PC-3 (cell line): ENCODE measurements at regions of chr11 and their contacts with region 1.

Region 1: DNA sequence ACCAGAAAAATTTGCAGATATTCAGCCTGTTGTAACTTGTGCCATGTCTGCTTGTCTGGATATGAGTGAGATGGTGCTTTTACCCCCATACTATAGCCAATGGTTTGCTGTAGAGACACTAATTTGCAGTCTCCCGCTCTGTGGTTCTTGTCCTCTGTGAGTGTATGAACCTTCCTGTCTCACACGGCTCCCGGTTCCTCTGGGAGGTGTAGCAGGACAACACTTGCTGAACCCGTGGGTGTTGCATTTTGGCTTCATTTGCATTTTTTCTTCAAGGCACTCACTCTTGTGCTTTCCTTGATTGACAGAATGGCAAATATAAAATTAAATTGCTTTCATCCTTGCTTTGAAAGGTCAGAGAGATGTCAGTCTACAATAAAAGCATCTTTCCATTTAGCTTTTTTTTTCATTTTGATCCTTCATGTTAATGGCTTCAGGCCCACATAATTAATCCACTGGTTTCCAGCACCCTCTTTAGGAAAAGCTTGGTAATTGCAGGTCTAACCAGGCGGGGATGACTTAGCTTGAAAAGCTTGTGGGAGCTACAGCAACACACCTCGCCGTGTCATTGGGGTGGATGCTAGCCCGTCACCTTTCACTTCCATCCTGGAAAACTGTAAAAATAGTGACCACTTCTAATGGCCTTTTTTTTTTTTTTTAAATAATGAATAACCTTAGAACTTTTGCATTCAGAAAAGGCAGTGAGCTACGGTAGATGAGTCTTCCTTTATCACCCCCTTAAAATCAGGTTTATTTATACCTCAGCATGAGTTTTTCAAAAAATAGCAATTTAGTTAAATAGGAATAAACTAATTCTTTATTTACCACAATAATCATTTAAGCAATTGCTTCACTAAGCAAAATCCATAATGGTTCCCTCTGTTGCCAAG is 27.4 kb upstream of the ST14 start:
- DNase-seq: peak; percentile 92
- ATAC-seq: peak; percentile 87
- H3K4me3 ChIP-seq: no peak overlapping the region
- H3K27ac ChIP-seq: no peak overlapping the region
- H3K4me1 ChIP-seq: no peaks in the 10 kb centered on the region
- H3K27me3 ChIP-seq: no peaks in the 10 kb centered on the region
- CTCF ChIP-seq: peak; percentile 95

Region 2: GRCh38 chr11:129881570-129882170 is 250.5 kb before region 1 on chr11:
- CTCF ChIA-PET with region 1: interaction called, 20 read pairs
- POLR2A ChIA-PET with region 1: no interaction called
- intact Hi-C with region 1: no loop called
- DNase-seq: peak; percentile 74
- ATAC-seq: peak; percentile 87
- H3K4me3 ChIP-seq: no peak overlapping the region
- H3K27ac ChIP-seq: no peak overlapping the region
- H3K4me1 ChIP-seq: no peaks in the 10 kb centered on the region
- H3K27me3 ChIP-seq: no peaks in the 10 kb centered on the region
- CTCF ChIP-seq: peak; percentile 86

Region 3: DNA sequence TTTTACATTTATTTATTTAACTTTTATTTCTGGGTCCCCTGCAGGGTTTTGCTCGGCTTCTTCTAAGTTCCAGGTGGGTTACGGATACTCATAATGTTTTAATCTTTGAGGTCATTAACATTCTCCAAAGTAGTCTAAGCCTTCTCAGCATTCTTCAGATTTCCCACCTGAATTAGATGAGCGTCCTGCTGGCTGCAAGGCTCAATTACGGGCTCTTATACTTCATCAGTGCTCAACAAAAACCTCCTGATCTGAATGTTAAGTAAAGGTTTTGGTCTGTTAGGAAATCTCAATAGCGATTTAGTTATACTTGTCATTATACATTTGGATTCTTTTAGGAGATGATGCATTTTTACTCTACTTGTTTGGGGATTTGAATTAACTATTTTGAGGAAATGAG is 209.5 kb before region 1 on chr11:
- CTCF ChIA-PET with region 1: interaction called, 34 read pairs
- POLR2A ChIA-PET with region 1: no interaction called
- intact Hi-C with region 1: loop called (anchors 1 kb)
- DNase-seq: peak; percentile 30
- ATAC-seq: no peak; the same call in 1 of the 2 replicates
- H3K4me3 ChIP-seq: no peak overlapping the region
- H3K27ac ChIP-seq: no peak overlapping the region
- H3K4me1 ChIP-seq: peaks cover 8% of the 10 kb centered on the region
- H3K27me3 ChIP-seq: no peaks in the 10 kb centered on the region
- CTCF ChIP-seq: no peak

Region 4: GRCh38 chr11:130069684-130070108 is 62.5 kb before region 1 on chr11 and contains the start of gene APLP2:
- CTCF ChIA-PET with region 1: interaction called, 20 read pairs
- POLR2A ChIA-PET with region 1: interaction called, 9 read pairs
- intact Hi-C with region 1: loop called (anchors 1 kb)
- DNase-seq: peak; percentile 99
- ATAC-seq: peak; percentile 77
- H3K4me3 ChIP-seq: peak within 1 kb of the TSS; percentile 78
- H3K27ac ChIP-seq: peak within 1 kb of the TSS; percentile 77
- H3K4me1 ChIP-seq: peaks cover 22% of the 10 kb centered on the region
- H3K27me3 ChIP-seq: no peaks in the 10 kb centered on the region
- CTCF ChIP-seq: no peak
- total RNA-seq, gene APLP2: 345 and 371 TPM in 2 replicates

Region 5: GRCh38 chr11:130278151-130278550 is 145.9 kb after region 1 on chr11:
- CTCF ChIA-PET with region 1: no interaction called
- POLR2A ChIA-PET with region 1: no interaction called
- intact Hi-C with region 1: no loop called
- DNase-seq: no peak
- ATAC-seq: no peak
- H3K4me3 ChIP-seq: no peak overlapping the region
- H3K27ac ChIP-seq: no peak overlapping the region
- H3K4me1 ChIP-seq: no peaks in the 10 kb centered on the region
- H3K27me3 ChIP-seq: no peaks in the 10 kb centered on the region
- CTCF ChIP-seq: no peak